GM23248 (cell line): ENCODE measurements at regions of chr4 and their contacts with region 1.

Region 1: GRCh38 chr4:127732613-127733328 is 2.6 kb downstream of the SLC25A31 start:
- DNase-seq: peak; percentile 63
- H3K4me3 ChIP-seq: no peak overlapping the region
- H3K27ac ChIP-seq: no peak overlapping the region
- H3K4me1 ChIP-seq: no peaks in the 10 kb centered on the region
- H3K27me3 ChIP-seq: no peaks in the 10 kb centered on the region

Region 2: DNA sequence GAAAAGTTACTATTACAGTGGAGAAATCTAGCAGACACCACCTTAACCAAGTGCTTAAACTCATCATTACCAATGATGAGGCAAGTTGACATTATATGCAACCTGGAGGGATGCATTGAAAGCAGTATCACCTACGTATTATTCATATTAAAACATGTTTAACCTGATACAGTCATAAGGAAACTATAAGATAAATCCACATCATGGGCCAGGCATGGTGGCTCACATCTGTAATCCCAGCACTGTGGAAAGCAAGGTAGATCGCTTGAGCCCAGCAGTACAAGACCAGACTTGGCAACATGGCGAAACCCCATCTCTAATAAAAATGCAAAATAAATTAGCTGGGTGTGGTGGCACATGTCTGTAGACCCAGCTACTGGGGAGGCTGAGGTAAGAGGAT is 122.3 kb before region 1 on chr4:
- in situ Hi-C with region 1: loop called (anchors 5 kb)
- DNase-seq: no peak
- H3K4me3 ChIP-seq: no peak overlapping the region
- H3K27ac ChIP-seq: no peak overlapping the region
- H3K4me1 ChIP-seq: no peaks in the 10 kb centered on the region
- H3K27me3 ChIP-seq: 0 out of 2 replicates have a peak, but pooled peaks cover 9% of the 10 kb centered on the region

Region 3: GRCh38 chr4:128031756-128032384 is 299.1 kb after region 1 on chr4:
- in situ Hi-C with region 1: no loop called
- DNase-seq: no peak
- H3K4me3 ChIP-seq: no peak overlapping the region
- H3K27ac ChIP-seq: no peak overlapping the region
- H3K4me1 ChIP-seq: no peaks in the 10 kb centered on the region
- H3K27me3 ChIP-seq: no peaks in the 10 kb centered on the region